Left cardiac atrium (tissue), 4 donors: ENCODE measurements at regions of chr1 and their contacts with region 1.

Region 1: DNA sequence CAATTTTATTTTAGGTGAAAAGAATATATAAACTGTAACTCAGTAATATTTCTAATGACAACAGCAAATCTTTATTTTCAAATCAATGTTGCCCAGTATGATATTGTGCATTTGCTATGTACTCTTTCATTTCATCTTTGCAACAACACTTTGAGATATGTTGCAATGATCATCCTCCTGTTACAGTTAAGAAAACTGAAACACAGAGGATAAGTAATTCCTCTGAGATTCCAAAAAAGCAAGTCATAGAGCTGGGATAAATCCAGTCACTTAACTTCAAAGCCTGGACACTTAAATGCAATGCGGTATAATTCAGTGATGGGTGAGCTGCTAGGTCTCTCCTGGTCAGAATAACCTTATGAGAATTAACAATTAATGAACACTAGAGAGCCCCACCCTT is 48.6 kb upstream of the EXO1 start:
- DNase-seq: no peak
- ATAC-seq: no peak

Region 2: GRCh38 chr1:241531195-241532161 is 267.9 kb before region 1 on chr1:
- intact Hi-C with region 1: no loop called
- DNase-seq: no peak
- ATAC-seq: peak; percentile 87 to 88

Region 3: GRCh38 chr1:241860922-241861321 is 61.5 kb after region 1 on chr1:
- intact Hi-C with region 1: loop called in 1 of 2 experiments (anchors 5 kb)
- DNase-seq: no peak
- ATAC-seq: no peak

Region 4: GRCh38 chr1:241888232-241888631 is 88.8 kb after region 1 on chr1:
- intact Hi-C with region 1: no loop called
- DNase-seq: no peak
- ATAC-seq: no peak